K562 (cell line): ENCODE measurements at regions of chr9 and their contacts with region 1.

Region 1: DNA sequence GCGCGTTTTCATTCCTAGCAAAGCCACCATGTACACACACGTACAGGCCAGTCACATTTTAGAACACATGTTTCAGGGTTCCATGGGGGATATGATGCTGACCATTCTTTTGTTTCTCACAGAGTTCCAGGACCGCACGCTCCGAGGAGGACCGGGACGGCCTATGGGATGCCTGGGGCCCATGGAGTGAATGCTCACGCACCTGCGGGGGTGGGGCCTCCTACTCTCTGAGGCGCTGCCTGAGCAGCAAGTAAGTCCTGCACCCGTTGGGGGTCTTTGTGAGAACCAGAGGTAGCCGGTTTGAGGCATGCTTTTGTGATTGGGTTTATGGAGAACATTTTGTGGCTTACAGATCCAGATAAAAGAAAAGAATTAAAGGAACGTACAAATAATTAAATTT is 30.8 kb downstream of the ADAMTSL1 start:
- DNase-seq: no peak
- ATAC-seq: no peak
- H3K4me3 ChIP-seq: no peak overlapping the region
- H3K27ac ChIP-seq: no peak overlapping the region
- H3K4me1 ChIP-seq: no peaks in the 10 kb centered on the region
- H3K27me3 ChIP-seq: no peaks in the 10 kb centered on the region
- CTCF ChIP-seq: no peak
- EP300 ChIP-seq: no peak
- POLR2A ChIP-seq: no peak
- RAD21 ChIP-seq: no peak

Region 2: GRCh38 chr9:18447131-18447530 is 57.6 kb before region 1 on chr9:
- CTCF ChIA-PET with region 1: no interaction called
- POLR2A ChIA-PET with region 1: no interaction called
- in situ Hi-C with region 1: no loop called
- intact Hi-C with region 1: no loop called
- DNase-seq: no peak
- ATAC-seq: no peak
- H3K4me3 ChIP-seq: no peak overlapping the region
- H3K27ac ChIP-seq: no peak overlapping the region
- H3K4me1 ChIP-seq: no peaks in the 10 kb centered on the region
- H3K27me3 ChIP-seq: no peaks in the 10 kb centered on the region
- CTCF ChIP-seq: no peak
- EP300 ChIP-seq: no peak
- POLR2A ChIP-seq: no peak
- RAD21 ChIP-seq: no peak

Region 3: DNA sequence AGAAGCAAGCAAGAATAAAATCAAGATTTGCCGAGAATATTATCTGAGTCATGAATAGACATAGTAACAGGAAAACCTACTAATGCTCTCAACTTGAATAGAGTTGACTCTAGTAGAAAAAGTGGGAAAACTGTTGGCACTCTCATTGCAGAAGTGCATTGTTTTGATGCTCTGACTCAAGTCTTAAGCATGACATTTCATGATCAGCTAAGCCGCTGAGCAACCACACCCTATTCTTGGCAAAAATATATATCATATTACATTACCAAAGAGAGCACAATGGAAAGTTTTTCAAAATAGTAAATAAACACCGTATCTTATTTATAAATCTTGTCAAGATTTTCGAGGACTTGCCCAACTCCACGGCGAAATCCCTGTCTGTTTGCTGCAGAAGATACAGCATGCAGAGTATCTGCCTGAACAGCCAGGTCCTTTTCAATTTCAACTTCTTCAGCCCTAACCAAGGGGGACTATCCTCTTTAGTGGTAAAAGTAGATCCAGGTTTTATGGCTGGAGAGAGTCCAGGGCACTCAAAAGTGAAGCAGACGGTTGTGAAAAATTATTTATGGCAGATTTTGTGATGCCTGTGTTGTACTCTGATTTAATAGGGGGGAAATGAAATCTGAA is 44.6 kb before region 1 on chr9:
- CTCF ChIA-PET with region 1: no interaction called
- POLR2A ChIA-PET with region 1: no interaction called
- in situ Hi-C with region 1: no loop called
- intact Hi-C with region 1: no loop called
- DNase-seq: no peak
- ATAC-seq: no peak
- H3K4me3 ChIP-seq: no peak overlapping the region
- H3K27ac ChIP-seq: no peak overlapping the region
- H3K4me1 ChIP-seq: no peaks in the 10 kb centered on the region
- H3K27me3 ChIP-seq: no peaks in the 10 kb centered on the region
- CTCF ChIP-seq: no peak
- EP300 ChIP-seq: no peak
- POLR2A ChIP-seq: no peak
- RAD21 ChIP-seq: no peak

Region 4: DNA sequence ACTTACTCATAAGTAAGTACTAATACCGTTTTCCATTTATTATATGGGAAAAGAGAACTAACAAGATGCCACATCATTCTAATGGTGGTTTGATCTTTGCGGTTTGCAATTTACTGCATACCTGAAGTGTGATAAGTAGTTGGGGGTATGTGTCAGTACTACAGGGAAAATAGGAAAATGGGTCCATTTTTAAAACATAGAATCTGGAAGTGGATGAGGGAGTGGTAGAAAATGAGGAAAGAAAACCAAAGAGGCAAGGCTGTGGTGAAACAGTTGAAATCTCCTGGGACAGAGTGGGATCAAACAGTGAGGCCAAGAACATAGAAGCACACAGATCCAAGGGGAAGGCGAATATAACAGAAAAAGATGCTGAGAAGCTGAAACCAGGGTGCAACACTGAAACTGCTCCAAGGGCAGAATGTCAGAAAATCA is 24.0 kb before region 1 on chr9:
- CTCF ChIA-PET with region 1: no interaction called
- POLR2A ChIA-PET with region 1: no interaction called
- in situ Hi-C with region 1: no loop called
- intact Hi-C with region 1: loop called (anchors 1 kb)
- DNase-seq: no peak
- ATAC-seq: no peak
- H3K4me3 ChIP-seq: no peak overlapping the region
- H3K27ac ChIP-seq: no peak overlapping the region
- H3K4me1 ChIP-seq: no peaks in the 10 kb centered on the region
- H3K27me3 ChIP-seq: no peaks in the 10 kb centered on the region
- CTCF ChIP-seq: no peak
- EP300 ChIP-seq: no peak
- POLR2A ChIP-seq: no peak
- RAD21 ChIP-seq: no peak